Vagina (tissue), 2 donors: ENCODE measurements at regions of chr14 and their contacts with region 1.

Region 1: GRCh38 chr14:69260861-69261564 is 1.1 kb downstream of the GALNT16 start:
- DNase-seq: no peak
- H3K4me3 ChIP-seq: peak overlapping the region; percentile 53 to 54
- H3K27ac ChIP-seq: peak overlapping the region; percentile 53
- H3K4me1 ChIP-seq: peaks cover 29% of the 10 kb centered on the region
- H3K27me3 ChIP-seq: no peaks in the 10 kb centered on the region
- CTCF ChIP-seq: peak in 2 of 3 experiments; percentile 36 to 55
- POLR2A ChIP-seq: no peak

Region 2: GRCh38 chr14:68458840-68459469 is 802.1 kb before region 1 on chr14:
- intact Hi-C with region 1: no loop called
- DNase-seq: no peak
- H3K4me3 ChIP-seq: no peak overlapping the region
- H3K27ac ChIP-seq: peak overlapping the region; percentile 71
- H3K4me1 ChIP-seq: peaks cover 35% of the 10 kb centered on the region
- H3K27me3 ChIP-seq: no peaks in the 10 kb centered on the region
- CTCF ChIP-seq: no peak
- POLR2A ChIP-seq: no peak

Region 3: DNA sequence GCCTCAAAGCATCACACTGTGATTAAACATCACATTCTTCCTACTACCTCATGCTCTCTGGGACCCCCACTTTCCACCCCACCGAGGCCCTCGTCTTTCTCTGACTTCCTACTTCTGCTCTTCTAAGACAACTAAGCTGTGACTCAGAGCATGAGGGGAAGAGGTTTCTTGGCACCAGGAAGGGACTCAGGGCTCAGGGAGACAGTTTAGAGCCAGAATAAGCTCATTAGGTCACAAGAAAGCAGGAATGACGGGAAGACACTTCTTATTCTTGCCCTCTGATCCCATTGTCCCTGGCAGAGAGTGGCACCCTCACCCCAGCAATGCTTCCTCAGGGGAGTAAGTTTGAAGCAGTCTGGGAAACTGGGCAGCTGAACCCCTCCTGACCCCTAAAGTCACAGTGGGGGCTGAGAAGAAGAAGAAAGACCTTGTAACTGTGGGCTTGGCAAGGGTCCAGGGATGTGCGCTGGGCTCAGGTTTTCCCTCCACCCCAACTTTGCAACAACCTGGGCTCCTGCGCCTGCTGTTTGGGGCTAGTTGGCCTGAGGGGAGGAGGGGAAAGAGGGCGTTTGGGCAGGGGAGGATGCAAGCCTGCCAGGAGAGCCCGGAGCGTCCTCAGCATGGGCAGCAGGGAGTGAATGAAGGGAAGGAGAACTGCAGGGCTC is 217.3 kb before region 1 on chr14:
- intact Hi-C with region 1: no loop called
- DNase-seq: no peak
- H3K4me3 ChIP-seq: no peak overlapping the region
- H3K27ac ChIP-seq: peak overlapping the region; percentile 90
- H3K4me1 ChIP-seq: peaks cover 69% of the 10 kb centered on the region
- H3K27me3 ChIP-seq: no peaks in the 10 kb centered on the region
- CTCF ChIP-seq: no peak
- POLR2A ChIP-seq: no peak

Region 4: DNA sequence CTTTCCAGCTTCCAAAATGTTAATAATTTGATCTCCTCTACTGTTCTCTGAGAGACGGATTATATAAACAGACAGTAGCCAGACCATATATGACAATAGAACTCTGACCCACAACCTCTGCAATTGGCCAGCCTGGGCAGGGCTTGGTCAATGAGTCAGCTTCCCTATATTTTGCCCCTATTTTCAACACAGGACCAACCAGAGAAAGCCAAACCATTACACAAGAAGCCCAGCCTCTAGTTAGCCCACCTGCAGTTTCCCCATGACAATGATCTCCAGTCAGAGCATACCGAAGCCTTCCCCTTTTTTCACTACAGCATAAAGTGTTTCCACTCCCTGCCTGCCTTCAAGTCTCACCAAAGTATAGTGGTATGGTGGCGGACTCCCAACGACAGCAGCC is 77.3 kb before region 1 on chr14:
- intact Hi-C with region 1: no loop called
- DNase-seq: no peak
- H3K4me3 ChIP-seq: no peak overlapping the region
- H3K27ac ChIP-seq: no peak overlapping the region
- H3K4me1 ChIP-seq: no peaks in the 10 kb centered on the region
- H3K27me3 ChIP-seq: no peaks in the 10 kb centered on the region
- CTCF ChIP-seq: no peak
- POLR2A ChIP-seq: no peak

Region 5: GRCh38 chr14:69354383-69355153 is 93.6 kb after region 1 on chr14:
- intact Hi-C with region 1: loop called (anchors 10 kb)
- DNase-seq: no peak
- H3K4me3 ChIP-seq: no peak overlapping the region
- H3K27ac ChIP-seq: peak overlapping the region; percentile 79
- H3K4me1 ChIP-seq: peaks cover 38% of the 10 kb centered on the region
- H3K27me3 ChIP-seq: no peaks in the 10 kb centered on the region
- CTCF ChIP-seq: no peak
- POLR2A ChIP-seq: no peak

Region 6: GRCh38 chr14:69387311-69387710 is 126.3 kb after region 1 on chr14:
- intact Hi-C with region 1: no loop called
- DNase-seq: no peak
- H3K4me3 ChIP-seq: no peak overlapping the region
- H3K27ac ChIP-seq: no peak overlapping the region
- H3K4me1 ChIP-seq: peaks cover 28% of the 10 kb centered on the region
- H3K27me3 ChIP-seq: no peaks in the 10 kb centered on the region
- CTCF ChIP-seq: no peak
- POLR2A ChIP-seq: no peak